Right ventricle myocardium superior (tissue), 1 donor: ENCODE measurements at regions of chr9 and their contacts with region 1.

Region 1: DNA sequence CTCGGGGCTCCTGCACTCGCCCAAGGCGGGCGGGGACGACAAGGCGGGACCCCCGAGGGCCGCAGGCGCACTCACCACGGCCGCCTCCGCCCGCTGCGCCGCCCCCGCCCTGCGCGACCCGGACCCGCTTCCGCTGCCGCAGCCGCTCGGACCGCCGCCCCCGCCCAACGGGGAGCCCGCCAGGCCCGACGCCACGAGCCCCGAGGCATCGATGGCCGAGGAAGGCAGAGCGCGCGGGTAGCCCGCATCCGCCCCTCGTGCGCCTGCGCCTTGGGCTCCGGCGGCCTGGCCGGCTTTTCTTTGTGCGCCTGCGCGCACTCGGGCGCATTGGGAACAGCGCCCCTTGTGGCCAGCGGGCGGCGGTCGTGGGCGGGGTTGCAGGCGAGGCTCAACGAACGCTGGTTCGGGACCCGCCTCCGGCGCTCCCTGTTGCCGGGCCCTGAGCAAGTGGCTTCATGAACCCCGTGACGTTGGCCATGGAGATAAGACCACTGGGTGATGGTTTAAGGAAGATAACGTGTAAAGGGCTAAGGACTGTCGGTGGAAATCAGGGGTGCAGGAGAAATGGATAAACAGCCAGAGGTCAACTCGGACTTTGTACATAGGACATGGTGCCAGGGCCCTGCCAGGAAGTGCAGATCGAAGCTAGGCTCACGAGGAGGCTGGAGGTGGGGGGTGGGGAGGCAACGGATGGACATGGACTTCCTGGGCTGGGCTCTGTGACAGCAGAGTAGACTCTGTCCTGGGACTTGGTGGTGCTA is at the starts of genes C8G and FBXW5:
- DNase-seq: peak; percentile 97
- ATAC-seq: peak; percentile 77
- total RNA-seq, gene C8G: 1.1 TPM
- total RNA-seq, gene FBXW5: 142 TPM

Region 2: DNA sequence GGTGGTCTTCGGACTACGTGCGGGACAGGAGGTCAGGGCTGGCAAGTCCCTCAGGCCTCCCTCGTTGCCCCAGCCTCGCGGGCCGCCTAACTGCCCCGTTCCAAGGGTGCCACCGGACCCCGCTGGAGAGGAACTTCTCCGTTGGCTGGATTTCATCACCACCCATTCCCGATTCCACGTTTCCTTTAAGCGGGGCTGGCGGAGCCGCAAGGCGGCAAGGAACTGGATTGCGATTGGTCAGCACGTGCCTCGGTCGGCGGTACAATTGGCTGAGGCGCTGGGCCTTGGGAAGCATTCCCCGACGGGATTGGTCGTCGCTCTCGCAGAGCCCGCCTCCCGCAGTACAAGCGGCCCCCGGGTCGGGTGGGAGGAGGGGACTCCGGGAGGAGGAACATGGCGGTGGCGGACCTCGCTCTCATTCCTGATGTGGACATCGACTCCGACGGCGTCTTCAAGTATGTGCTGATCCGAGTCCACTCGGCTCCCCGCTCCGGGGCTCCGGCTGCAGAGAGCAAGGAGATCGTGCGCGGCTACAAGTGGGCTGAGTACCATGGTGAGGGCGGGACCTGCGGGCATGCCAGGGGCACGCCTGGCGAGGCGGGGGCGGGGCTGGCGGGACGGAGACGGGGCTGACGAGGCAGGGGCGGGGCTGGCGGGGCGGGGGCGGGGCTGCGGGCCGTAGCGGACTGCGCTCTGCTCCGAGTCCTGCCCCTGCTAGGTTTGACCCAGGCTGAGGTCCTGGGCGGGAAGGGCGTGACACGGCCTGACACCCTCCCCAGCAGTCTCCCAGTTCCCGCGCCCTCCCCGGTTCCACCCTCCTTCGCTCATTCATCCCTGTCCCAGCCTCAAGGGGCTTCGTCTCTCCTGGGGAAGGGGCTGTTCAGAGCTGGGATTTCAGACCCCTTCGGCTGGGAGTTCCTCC is 95.4 kb before region 1 on chr9 and contains the start of gene PHPT1:
- intact Hi-C with region 1: loop called (anchors 5 kb)
- DNase-seq: peak; percentile 99
- ATAC-seq: peak; percentile 83
- total RNA-seq, gene PHPT1: 345 TPM

Region 3: DNA sequence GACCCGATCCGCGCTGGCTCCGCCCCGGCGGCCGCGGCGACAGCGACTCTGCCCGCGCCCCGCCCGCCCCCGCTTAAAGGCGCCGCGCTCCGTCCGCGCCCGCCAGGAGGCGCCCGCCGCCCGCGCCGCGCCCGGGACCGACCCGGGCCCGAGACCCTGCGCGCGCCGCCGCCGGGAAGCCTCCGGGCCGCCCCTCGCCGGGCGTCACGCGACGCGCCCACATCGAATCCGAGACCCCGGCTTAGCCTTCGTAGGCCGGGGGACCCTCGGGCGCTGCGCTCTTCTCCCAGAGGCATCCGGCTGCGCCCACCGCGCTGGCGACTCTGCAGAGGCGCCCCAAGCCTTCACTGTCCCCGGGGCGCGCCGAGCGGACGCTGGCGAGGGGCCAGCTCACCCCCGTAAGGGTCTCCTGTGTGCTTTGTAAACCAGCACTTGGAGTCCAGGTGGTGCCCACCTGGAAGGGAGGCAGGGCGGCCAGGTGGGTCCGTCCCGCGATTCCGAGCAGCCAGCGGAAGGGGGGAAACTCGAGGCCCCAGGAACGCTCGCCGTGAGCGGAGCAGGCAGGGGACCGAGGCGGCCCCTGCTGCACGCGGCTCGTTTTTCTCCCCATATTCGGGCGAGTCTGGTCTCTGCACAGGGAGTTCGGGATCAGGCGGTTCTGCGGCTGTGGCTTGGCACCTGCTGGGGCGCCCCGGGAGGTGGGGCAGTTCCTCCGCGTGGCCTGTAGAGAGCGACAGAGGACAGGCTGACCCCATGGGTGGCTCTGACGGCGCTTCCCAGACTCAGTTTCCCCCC is 83.8 kb after region 1 on chr9:
- intact Hi-C with region 1: no loop called
- DNase-seq: peak; percentile 84
- ATAC-seq: peak; percentile 67

Region 4: GRCh38 chr9:137492464-137493162 is 547.9 kb after region 1 on chr9:
- intact Hi-C with region 1: no loop called
- DNase-seq: peak; percentile 33
- ATAC-seq: no peak